ENCODE measurements at regions of chr16 and their contacts with region 1.

Region 1: GRCh38 chr16:72832621-72833248 is 215.2 kb downstream of the ZFHX3 start:
- DNase-seq: peak; percentile 78
- H3K4me3 Mint-ChIP-seq: no peak overlapping the region
- H3K27ac Mint-ChIP-seq: no peak overlapping the region
- H3K4me1 Mint-ChIP-seq: no peaks in the 10 kb centered on the region
- H3K27me3 Mint-ChIP-seq: no peaks in the 10 kb centered on the region

Region 2: DNA sequence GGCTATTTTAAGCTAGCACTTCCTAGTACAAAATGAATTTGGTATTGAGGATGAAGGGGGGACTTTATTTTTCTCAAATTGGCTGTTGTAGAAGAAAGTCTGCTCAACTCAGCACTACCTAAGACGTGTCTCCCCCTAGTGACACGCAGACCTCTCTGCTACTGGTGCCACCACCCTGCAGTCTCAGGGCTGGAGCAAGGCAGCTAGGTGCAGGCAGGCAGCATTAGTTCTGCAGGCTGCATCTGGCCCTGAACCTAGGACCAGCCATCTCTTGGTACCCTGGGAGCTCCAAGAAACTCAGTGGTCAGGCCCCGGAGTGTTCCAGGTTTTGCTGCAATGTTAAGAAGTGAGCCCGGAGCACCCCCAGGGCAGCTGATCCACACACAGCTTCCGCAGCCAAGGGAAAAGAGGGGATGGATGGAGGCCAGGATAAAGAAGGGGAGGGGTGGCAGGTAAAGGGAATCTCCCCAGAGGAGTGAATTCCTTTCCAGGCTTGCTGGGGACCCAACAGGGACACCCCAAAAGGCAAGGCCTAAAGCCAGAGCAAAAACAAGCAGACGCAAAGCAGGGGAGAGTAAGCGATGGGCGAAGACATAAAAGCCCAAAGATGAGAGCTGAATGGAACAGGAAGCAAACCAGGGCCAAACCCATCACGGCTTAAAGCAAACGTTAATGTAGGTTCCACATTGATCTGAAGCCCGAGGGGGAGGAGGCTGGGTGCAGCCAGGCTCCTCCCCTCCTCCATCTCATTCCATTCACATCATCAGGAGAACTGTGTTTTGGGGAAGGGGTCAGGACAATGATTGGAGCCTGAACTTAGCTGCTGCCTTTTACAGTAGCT is 14.7 kb after region 1 on chr16:
- CTCF ChIA-PET with region 1: interaction called, 11 read pairs
- intact Hi-C with region 1: no loop called
- DNase-seq: peak; percentile 33
- H3K4me3 Mint-ChIP-seq: no peak overlapping the region
- H3K27ac Mint-ChIP-seq: no peak overlapping the region
- H3K4me1 Mint-ChIP-seq: peaks cover 6% of the 10 kb centered on the region
- H3K27me3 Mint-ChIP-seq: peaks cover 6% of the 10 kb centered on the region

Region 3: DNA sequence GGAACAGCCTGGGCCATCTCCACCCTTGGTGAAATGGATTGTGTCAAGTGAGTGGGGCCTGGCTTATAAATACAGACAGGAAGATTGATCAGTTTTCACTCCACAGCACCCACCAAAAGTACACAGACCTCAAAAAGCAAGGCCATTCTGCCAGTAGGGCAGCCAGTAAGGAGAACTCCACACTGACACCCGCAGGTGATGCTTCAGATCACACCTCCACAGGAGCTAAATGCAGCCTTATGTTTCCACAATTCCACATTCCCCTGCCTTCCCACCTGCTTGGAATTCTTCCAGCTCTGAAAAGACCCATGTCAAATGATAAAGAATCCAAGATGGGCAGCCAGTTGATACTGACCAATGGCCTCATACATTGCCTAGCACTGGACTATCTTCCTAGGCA is 24.1 kb after region 1 on chr16:
- CTCF ChIA-PET with region 1: interaction called, 13 read pairs
- intact Hi-C with region 1: no loop called
- DNase-seq: peak; percentile 35
- H3K4me3 Mint-ChIP-seq: no peak overlapping the region
- H3K27ac Mint-ChIP-seq: no peak overlapping the region
- H3K4me1 Mint-ChIP-seq: no peaks in the 10 kb centered on the region
- H3K27me3 Mint-ChIP-seq: no peaks in the 10 kb centered on the region

Region 4: DNA sequence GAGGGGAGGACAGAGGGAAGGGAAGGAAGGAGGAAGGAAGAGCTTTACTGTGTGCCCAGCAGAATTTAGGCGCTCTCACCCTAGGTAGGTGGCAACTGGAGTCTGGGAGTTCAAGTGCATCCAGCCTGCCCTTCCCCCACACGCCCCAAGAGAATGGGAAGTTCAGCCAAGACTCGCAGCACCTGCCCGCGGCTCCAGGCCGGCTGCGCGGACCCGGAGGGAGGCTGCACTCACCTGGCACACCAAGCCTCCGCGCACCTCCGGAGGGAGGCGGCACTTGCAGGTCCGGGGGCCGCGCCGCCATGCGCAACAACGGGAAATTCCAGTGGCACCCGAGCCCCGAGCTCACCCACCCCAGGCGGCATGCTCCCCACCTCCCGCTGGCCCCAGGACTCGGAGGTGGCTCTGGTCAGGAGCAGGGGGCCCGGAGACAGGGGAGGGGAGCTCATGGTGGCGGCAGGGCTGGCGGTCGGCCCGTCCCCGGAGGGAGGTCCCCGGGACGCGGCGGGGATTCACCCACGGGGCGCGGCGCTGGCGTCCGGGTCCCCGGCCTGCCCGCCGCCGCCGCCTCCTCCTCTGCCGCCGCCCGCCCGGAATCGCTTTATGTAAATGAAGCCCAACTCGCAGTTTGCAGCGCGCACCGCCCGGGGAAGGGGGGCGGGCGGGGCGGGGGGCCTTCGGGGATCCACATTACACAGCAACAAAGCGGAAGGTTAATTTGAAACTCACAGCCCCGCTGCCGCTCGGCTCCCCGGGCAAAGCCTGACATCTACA is 215.0 kb after region 1 on chr16 and contains the start of gene ZFHX3:
- CTCF ChIA-PET with region 1: interaction called, 4 read pairs
- intact Hi-C with region 1: loop called (anchors 2 kb)
- DNase-seq: peak; percentile 57
- H3K4me3 Mint-ChIP-seq: peak within 1 kb of the TSS; percentile 46
- H3K27ac Mint-ChIP-seq: no peak within 1 kb of the TSS
- H3K4me1 Mint-ChIP-seq: peaks cover 4% of the 10 kb centered on the region
- H3K27me3 Mint-ChIP-seq: peaks cover 24% of the 10 kb centered on the region
- total RNA-seq, gene ZFHX3: 0.44 to 0.72 TPM

Region 5: DNA sequence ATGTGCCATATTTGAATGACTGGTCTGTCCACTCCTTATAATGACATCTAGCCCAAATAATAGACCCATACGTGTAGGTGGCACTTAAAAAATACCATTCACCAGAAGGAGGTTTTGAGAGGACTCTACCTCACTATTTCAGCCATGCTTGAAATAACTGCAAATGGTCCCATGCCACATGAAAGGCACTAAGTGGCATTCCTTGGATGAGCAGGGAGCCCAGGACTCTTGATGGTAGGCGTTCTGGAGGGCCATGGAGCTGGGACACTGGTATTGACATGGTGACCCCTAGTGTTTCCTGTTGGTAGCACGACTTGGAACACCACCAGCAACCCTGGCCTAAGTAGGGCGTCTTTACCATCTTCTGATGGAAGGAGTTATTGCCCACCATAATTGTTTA is 363.9 kb after region 1 on chr16:
- CTCF ChIA-PET with region 1: interaction called, 8 read pairs
- intact Hi-C with region 1: loop called (anchors 1 kb)
- DNase-seq: peak; percentile 52
- H3K4me3 Mint-ChIP-seq: no peak overlapping the region
- H3K27ac Mint-ChIP-seq: no peak overlapping the region
- H3K4me1 Mint-ChIP-seq: no peaks in the 10 kb centered on the region
- H3K27me3 Mint-ChIP-seq: no peaks in the 10 kb centered on the region

Region 6: GRCh38 chr16:73878611-73879010 is 1045.9 kb after region 1 on chr16:
- CTCF ChIA-PET with region 1: no interaction called
- intact Hi-C with region 1: loop called (anchors 5 kb)
- DNase-seq: no peak
- H3K4me3 Mint-ChIP-seq: no peak overlapping the region
- H3K27ac Mint-ChIP-seq: no peak overlapping the region
- H3K4me1 Mint-ChIP-seq: no peaks in the 10 kb centered on the region
- H3K27me3 Mint-ChIP-seq: peaks cover 6% of the 10 kb centered on the region

Region 7: GRCh38 chr16:73956587-73957494 is 1124.1 kb after region 1 on chr16:
- CTCF ChIA-PET with region 1: interaction called, 6 read pairs
- intact Hi-C with region 1: loop called (anchors 5 kb)
- DNase-seq: peak; percentile 65
- H3K4me3 Mint-ChIP-seq: no peak overlapping the region
- H3K27ac Mint-ChIP-seq: no peak overlapping the region
- H3K4me1 Mint-ChIP-seq: no peaks in the 10 kb centered on the region
- H3K27me3 Mint-ChIP-seq: peaks cover 2% of the 10 kb centered on the region

Measured in activated naive CD4-positive, alpha-beta T cell treated with anti-CD3 and anti-CD28 coated beads for 36 hours (primary cell).